Caco-2 (cell line): ENCODE measurements at regions of chr9 and their contacts with region 1.

Region 1: DNA sequence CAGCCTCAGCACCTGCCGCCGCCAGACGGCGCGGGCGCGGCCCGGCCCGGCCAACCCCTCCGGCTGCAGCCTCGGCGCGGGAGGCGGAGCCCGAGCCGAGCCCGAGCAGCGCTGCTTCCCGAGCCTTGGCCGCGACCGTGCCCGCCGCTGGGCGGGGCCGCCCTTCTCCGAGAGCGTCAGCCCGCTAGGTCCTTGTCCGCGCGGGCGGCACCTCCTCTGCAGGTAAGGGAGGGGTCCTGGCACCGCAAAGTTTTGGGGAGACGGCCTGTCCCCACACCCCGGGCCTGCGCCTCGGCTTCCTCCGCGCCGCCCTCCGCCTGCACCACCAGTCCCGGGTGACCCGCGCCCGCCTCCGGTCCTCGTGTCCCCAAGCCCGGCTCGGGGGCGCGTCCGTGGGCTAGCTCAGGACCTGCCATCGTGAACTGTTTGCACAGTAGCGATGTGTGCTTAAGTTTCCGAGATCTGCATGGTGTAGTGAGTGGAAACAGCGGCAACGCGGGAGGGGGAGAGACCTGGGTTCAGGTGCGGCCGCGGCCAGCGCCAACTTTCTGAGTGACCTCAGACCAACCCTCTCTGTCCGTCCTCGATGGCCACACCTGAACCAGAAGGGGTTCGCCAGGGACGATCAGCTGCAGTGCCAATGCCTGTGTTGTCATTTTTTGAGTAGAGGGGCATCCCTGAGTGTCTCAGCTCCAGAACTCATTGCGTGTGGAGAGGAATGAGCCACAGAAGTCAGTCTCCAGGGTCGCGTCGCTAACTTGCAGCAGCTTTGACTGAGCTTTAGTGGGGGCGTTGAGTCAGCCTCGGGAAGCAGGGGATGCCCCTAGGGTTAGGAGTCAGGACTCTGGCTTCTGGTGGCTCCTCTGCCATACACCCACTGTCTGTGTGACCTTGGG is at the start of gene FRMPD1:
- DNase-seq: peak; percentile 50 to 83
- H3K4me3 ChIP-seq: peak within 1 kb of the TSS; percentile 60
- H3K4me3 Mint-ChIP-seq: peak within 1 kb of the TSS; percentile 71
- H3K27ac Mint-ChIP-seq: no peak within 1 kb of the TSS
- H3K4me1 ChIP-seq: peaks cover 4% of the 10 kb centered on the region
- H3K4me1 Mint-ChIP-seq: no peaks in the 10 kb centered on the region
- H3K27me3 ChIP-seq: peaks cover 1% of the 10 kb centered on the region
- H3K27me3 Mint-ChIP-seq: peaks cover 41% of the 10 kb centered on the region
- CTCF ChIP-seq: no peak
- total RNA-seq, gene FRMPD1: not detected in 2 replicates

Region 2: GRCh38 chr9:37639109-37639762 is 11.9 kb before region 1 on chr9:
- CTCF ChIA-PET with region 1: no interaction called
- POLR2A ChIA-PET with region 1: no interaction called
- intact Hi-C with region 1: no loop called
- DNase-seq: no peak
- H3K4me3 ChIP-seq: no peak overlapping the region
- H3K4me3 Mint-ChIP-seq: no peak overlapping the region
- H3K27ac Mint-ChIP-seq: no peak overlapping the region
- H3K4me1 ChIP-seq: no peaks in the 10 kb centered on the region
- H3K4me1 Mint-ChIP-seq: no peaks in the 10 kb centered on the region
- H3K27me3 ChIP-seq: no peaks in the 10 kb centered on the region
- H3K27me3 Mint-ChIP-seq: peaks cover 14% of the 10 kb centered on the region
- CTCF ChIP-seq: no peak

Region 3: DNA sequence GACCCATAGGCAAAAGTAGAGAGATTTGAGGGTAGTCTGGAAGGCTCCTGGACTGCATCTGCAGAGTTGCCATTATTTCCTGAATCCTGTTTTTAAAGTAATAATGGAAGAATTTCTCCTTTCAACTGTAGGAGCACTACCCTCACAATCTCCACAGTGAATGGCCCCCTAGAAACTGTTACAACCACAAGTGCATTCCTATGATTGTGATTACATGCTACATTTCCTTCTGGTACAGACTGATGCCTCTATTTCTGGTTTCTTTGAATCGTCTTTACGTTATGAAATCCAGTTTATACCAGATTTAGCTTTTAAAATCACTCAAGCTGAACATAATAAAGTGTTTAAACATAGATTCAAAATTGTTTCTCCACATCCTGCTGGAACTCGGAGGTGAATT is 49.0 kb after region 1 on chr9:
- CTCF ChIA-PET with region 1: no interaction called
- POLR2A ChIA-PET with region 1: no interaction called
- intact Hi-C with region 1: loop called (anchors 5 kb)
- DNase-seq: no peak
- H3K4me3 ChIP-seq: no peak overlapping the region
- H3K4me3 Mint-ChIP-seq: no peak overlapping the region
- H3K27ac Mint-ChIP-seq: no peak overlapping the region
- H3K4me1 ChIP-seq: peaks cover 7% of the 10 kb centered on the region; the same call in 1 of the 2 replicates
- H3K4me1 Mint-ChIP-seq: peaks cover 7% of the 10 kb centered on the region
- H3K27me3 ChIP-seq: no peaks in the 10 kb centered on the region
- H3K27me3 Mint-ChIP-seq: peaks cover 8% of the 10 kb centered on the region
- CTCF ChIP-seq: no peak